Aorta (tissue), 5 donors: ENCODE measurements at regions of chr9 and their contacts with region 1.

Region 1: GRCh38 chr9:127899128-127899946 is at the start of gene ST6GALNAC6:
- DNase-seq: peak; percentile 82 to 93
- ATAC-seq: peak; percentile 80
- H3K4me3 ChIP-seq: peak within 1 kb of the TSS; percentile 77 to 97
- H3K27ac ChIP-seq: peak within 1 kb of the TSS; percentile 92 to 96
- H3K4me1 ChIP-seq: no peaks in the 10 kb centered on the region
- H3K27me3 ChIP-seq: no peaks in the 10 kb centered on the region
- total RNA-seq, gene ST6GALNAC6: 103 to 125 TPM

Region 2: GRCh38 chr9:127862075-127863011 is 37.0 kb before region 1 on chr9:
- intact Hi-C with region 1: loop called in 1 of 2 experiments (anchors 5 kb)
- DNase-seq: peak; percentile 86 to 94
- ATAC-seq: peak; percentile 67
- H3K4me3 ChIP-seq: no peak overlapping the region
- H3K27ac ChIP-seq: peak overlapping the region in 1 of 2 donors; percentile 66
- H3K4me1 ChIP-seq: no peaks in the 10 kb centered on the region
- H3K27me3 ChIP-seq: no peaks in the 10 kb centered on the region